ENCODE measurements at regions of chr4 and their contacts with region 1.

Region 1: GRCh38 chr4:18815779-18816173 is 794.2 kb upstream of the LCORL start:
- DNase-seq: no peak
- H3K4me3 ChIP-seq: no peak overlapping the region
- H3K27ac ChIP-seq: no peak overlapping the region
- H3K4me1 ChIP-seq: no peaks in the 10 kb centered on the region
- H3K27me3 ChIP-seq: no peaks in the 10 kb centered on the region
- CTCF ChIP-seq: no peak
- POLR2A ChIP-seq: no peak

Region 2: GRCh38 chr4:18105030-18106011 is 710.5 kb before region 1 on chr4:
- CTCF ChIA-PET with region 1: no interaction called
- POLR2A ChIA-PET with region 1: no interaction called
- dilution Hi-C with region 1: no loop called
- intact Hi-C with region 1: no loop called
- DNase-seq: peak; percentile 57
- H3K4me3 ChIP-seq: no peak overlapping the region
- H3K27ac ChIP-seq: peak overlapping the region; percentile 46
- H3K4me1 ChIP-seq: peaks cover 36% of the 10 kb centered on the region
- H3K27me3 ChIP-seq: no peaks in the 10 kb centered on the region
- CTCF ChIP-seq: no peak
- POLR2A ChIP-seq: no peak

Region 3: GRCh38 chr4:18578307-18578706 is 237.5 kb before region 1 on chr4:
- CTCF ChIA-PET with region 1: no interaction called
- POLR2A ChIA-PET with region 1: no interaction called
- dilution Hi-C with region 1: no loop called
- intact Hi-C with region 1: no loop called
- DNase-seq: no peak
- H3K4me3 ChIP-seq: no peak overlapping the region
- H3K27ac ChIP-seq: no peak overlapping the region
- H3K4me1 ChIP-seq: no peaks in the 10 kb centered on the region
- H3K27me3 ChIP-seq: peaks cover 11 to 12% of the 10 kb centered on the region in 2 experiments
- CTCF ChIP-seq: no peak
- POLR2A ChIP-seq: no peak

Region 4: DNA sequence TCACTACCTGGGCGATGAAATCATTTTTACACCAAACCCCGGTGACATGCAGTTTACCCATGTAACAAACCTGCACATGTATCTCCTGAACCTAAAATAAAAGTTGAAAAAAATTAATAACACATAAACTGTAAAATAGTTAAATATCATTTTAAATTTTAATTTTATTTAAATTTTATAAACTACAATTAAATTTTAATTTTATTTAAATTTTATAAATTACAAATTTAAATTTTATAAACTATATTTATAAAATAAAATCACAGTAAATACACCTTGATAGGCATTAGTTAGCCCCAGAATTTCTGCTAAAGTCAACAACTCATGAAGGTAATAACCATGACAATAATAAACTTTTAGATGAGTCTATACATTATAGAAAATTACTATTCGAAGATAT is 38.6 kb before region 1 on chr4:
- CTCF ChIA-PET with region 1: no interaction called
- POLR2A ChIA-PET with region 1: no interaction called
- dilution Hi-C with region 1: no loop called
- intact Hi-C with region 1: no loop called
- DNase-seq: no peak
- H3K4me3 ChIP-seq: no peak overlapping the region
- H3K27ac ChIP-seq: no peak overlapping the region
- H3K4me1 ChIP-seq: no peaks in the 10 kb centered on the region
- H3K27me3 ChIP-seq: no peaks in the 10 kb centered on the region
- CTCF ChIP-seq: no peak
- POLR2A ChIP-seq: no peak

Region 5: DNA sequence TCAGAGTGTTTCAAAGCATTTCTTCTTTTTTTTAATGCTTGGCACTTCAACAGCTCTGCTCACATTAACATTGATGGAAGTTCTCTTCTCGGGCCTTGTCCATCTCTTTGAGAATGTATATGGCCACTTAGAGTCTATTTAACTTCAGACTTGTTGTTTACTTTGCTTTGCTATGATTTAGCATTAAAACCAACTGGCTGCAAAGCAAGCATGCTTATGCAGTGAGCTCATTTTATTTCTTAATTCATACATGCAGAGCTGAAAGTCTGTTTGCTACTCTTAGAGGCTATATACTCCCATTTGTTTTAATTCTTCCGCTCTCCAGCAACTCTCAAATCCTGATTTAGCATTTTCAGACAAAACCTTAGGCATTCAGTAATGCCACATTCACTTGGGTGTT is 1776.9 kb after region 1 on chr4:
- CTCF ChIA-PET with region 1: no interaction called
- POLR2A ChIA-PET with region 1: no interaction called
- dilution Hi-C with region 1: no loop called
- intact Hi-C with region 1: loop called (anchors 5 kb)
- DNase-seq: no peak
- H3K4me3 ChIP-seq: no peak overlapping the region
- H3K27ac ChIP-seq: no peak overlapping the region
- H3K4me1 ChIP-seq: no peaks in the 10 kb centered on the region
- H3K27me3 ChIP-seq: no peaks in the 10 kb centered on the region
- CTCF ChIP-seq: no peak
- POLR2A ChIP-seq: no peak

Measured in endothelial cell of umbilical vein (primary cell).